Right ventricle myocardium superior (tissue), 1 donor: ENCODE measurements at regions of chr11 and their contacts with region 1.

Region 1: GRCh38 chr11:65817835-65818742 is 15.7 kb upstream of the SNX32 start:
- DNase-seq: peak; percentile 98
- ATAC-seq: peak; percentile 99

Region 2: GRCh38 chr11:65625628-65626342 is 192.3 kb before region 1 on chr11:
- intact Hi-C with region 1: loop called (anchors 10 kb)
- DNase-seq: peak; percentile 83
- ATAC-seq: peak; percentile 85

Region 3: DNA sequence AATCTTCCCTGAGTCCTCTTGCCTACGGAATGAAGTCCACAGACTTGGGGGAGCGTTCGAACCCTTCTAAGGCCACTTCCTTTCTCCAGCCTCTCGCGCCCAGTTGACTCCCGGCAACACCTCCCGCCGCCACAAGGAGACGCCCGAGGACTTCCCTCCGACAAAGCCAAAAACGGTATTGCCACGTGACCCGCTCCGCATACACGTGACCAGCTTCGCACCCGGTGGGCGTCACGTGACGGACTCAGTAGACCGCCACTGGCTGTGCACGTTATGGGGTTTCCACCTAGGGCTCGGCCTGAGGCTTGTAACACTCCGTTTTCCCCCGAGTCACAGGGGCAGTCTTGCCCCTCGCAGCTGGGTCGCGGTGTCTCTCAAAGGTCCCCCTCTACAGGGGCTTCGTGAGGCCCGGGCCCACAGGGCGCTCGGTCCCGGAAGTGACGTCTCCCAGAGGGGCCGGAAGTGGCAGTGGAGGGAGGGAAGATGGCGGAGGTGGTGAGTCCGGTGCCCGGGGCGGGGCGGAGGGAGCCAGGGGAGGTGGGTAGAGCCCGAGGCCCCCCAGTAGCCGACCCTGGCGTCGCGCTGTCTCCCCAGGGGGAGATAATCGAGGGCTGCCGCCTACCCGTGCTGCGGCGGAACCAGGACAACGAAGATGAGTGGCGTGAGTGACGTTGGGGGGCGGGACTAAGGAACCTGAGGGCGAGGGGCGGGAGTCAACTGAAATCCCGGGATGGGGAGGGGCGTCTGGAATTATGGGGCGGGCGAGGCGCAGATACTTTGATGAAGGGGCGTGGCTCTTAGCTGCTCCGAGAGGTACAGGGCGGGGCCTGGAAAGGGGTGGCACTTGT is 106.1 kb before region 1 on chr11 and contains the start of gene KAT5:
- intact Hi-C with region 1: loop called (anchors 5 kb)
- DNase-seq: peak; percentile 99
- ATAC-seq: peak; percentile 95
- total RNA-seq, gene KAT5: 40.8 TPM

Region 4: GRCh38 chr11:65779851-65780577 is 38.1 kb before region 1 on chr11:
- intact Hi-C with region 1: loop called (anchors 5 kb)
- DNase-seq: peak; percentile 90
- ATAC-seq: peak; percentile 91